Breast epithelium (tissue), 4 donors: ENCODE measurements at regions of chr2 and their contacts with region 1.

Region 1: GRCh38 chr2:175309799-175310198 is 128.3 kb upstream of the ATP5MC3 start:
- DNase-seq: no peak
- H3K4me3 ChIP-seq: no peak overlapping the region
- H3K27ac ChIP-seq: no peak overlapping the region
- H3K4me1 ChIP-seq: no peaks in the 10 kb centered on the region
- H3K27me3 ChIP-seq: peaks cover 0 to 2% of the 10 kb centered on the region in 2 donors
- CTCF ChIP-seq: no peak
- POLR2A ChIP-seq: no peak

Region 2: GRCh38 chr2:175251425-175252041 is 58.3 kb before region 1 on chr2:
- intact Hi-C with region 1: no loop called
- DNase-seq: no peak
- H3K4me3 ChIP-seq: no peak overlapping the region
- H3K27ac ChIP-seq: no peak overlapping the region
- H3K4me1 ChIP-seq: no peaks in the 10 kb centered on the region
- H3K27me3 ChIP-seq: peaks cover 0 to 5% of the 10 kb centered on the region in 2 donors
- CTCF ChIP-seq: peak in 2 of 3 donors; percentile 19 to 23
- POLR2A ChIP-seq: no peak

Region 3: DNA sequence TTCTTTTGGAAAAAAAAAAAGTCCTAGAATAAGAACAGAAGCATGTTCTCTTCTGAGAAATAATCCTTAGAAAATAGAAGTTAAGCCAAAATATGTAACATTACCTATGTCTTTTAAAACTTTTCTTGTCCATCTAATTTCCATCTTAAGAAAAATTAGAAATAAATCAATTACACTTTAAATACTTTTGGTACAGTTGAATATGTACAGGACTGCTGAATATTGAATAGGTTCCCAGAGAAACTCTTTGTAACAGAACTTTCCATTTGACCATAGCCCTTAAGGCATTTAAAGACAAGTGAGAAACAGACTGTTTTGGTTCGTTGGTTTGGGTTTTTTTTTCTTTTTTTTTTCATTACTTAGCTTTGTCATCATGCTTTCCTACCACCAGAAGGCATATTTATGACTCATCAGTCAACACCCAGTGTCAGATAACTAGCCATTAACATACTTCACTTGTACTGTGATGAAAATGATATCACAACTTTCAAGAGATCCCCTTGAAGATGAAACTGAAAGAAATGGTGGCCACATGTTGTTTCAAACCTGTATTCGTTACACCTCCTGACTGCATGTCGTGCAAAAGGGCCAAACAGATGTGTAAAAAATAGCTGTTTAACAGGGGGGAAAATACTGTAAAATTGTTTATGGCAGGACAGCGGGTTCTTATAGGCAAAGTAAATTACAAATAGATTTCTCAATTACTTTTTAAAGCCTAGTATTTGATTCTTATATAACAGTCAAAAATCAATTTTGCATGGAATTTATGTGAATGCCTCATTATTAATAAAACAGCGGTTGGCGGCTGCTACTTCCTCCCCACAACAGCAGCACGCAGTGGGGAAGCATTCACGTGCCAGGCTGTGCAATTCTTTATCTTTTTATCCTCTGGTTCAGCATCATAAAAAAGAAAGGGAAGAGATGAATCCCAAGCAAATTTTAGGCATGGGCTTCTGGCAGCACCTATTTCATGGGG is 1622.1 kb after region 1 on chr2:
- intact Hi-C with region 1: loop called (anchors 10 kb)
- DNase-seq: no peak
- H3K4me3 ChIP-seq: no peak overlapping the region
- H3K27ac ChIP-seq: no peak overlapping the region
- H3K4me1 ChIP-seq: no peaks in the 10 kb centered on the region
- H3K27me3 ChIP-seq: no peaks in the 10 kb centered on the region
- CTCF ChIP-seq: no peak
- POLR2A ChIP-seq: no peak